Activated CD4-positive, alpha-beta memory T cell treated with anti-CD3 and anti-CD28 coated beads for 36 hours (primary cell): ENCODE measurements at regions of chr15 and their contacts with region 1.

Region 1: DNA sequence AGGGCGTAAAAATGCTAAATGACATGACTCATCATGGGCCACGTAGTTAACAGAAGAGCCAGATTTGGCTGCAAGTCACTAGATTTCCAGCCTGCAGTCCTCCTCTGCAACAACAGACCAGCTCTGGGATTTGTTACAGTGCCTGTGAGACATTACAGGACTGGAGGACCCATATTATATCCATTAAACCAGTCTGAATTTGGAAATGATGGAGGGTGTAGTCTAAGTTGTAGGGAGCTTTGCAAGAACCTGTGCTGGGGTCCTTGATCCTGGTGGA is 10.8 kb downstream of the ZNF774 start:
- DNase-seq: no peak
- H3K4me3 Mint-ChIP-seq: no peak overlapping the region
- H3K27ac Mint-ChIP-seq: peak overlapping the region; percentile 39
- H3K4me1 Mint-ChIP-seq: peaks cover 24% of the 10 kb centered on the region
- H3K27me3 Mint-ChIP-seq: no peaks in the 10 kb centered on the region

Region 2: DNA sequence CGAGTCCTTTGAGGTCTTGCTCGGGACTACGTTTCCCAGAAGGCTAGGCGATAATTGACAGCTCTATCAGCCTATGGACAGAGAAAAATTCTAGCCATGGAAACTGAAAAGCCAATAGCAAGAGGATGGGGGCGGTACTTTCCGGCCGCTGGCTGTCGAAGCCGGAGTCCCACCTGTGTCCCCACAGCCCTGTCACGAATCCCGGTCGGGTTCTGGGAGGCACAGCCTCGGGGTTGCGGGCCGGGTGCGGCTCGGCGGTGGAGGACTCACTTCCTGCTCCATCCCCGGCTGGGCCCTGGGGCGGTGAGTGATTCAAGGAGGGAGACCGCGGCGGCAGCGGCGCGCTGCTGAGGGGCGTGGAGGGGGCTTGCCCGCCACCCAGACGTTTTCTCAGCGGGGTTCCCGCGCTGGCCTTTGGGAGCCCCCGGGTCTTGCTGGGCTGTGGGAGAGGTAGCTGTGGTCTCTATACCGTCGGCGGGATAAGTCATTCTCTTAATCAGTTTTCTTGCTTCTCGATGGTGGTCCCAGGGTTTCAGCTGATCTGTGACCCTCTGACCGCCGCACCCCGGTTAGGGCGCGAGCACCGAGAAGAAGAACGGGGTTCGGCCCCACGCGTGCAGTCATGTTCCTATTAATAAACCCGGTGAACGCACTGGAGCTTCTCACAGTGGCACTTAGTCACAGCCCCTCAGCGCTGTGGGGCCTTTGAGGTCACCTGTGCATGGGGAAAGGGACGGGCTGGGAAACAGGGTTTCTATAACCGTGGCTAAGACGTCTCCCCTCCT is 10.6 kb before region 1 on chr15 and contains the start of gene ZNF774:
- CTCF ChIA-PET with region 1: interaction called, 11 read pairs
- POLR2A ChIA-PET with region 1: no interaction called
- intact Hi-C with region 1: loop called (anchors 1 kb)
- DNase-seq: peak; percentile 93
- H3K4me3 Mint-ChIP-seq: peak within 1 kb of the TSS; percentile 87
- H3K27ac Mint-ChIP-seq: no peak within 1 kb of the TSS
- H3K4me1 Mint-ChIP-seq: peaks cover 6% of the 10 kb centered on the region
- H3K27me3 Mint-ChIP-seq: peaks cover 4% of the 10 kb centered on the region
- total RNA-seq, gene ZNF774: 0.68 to 1.1 TPM

Region 3: DNA sequence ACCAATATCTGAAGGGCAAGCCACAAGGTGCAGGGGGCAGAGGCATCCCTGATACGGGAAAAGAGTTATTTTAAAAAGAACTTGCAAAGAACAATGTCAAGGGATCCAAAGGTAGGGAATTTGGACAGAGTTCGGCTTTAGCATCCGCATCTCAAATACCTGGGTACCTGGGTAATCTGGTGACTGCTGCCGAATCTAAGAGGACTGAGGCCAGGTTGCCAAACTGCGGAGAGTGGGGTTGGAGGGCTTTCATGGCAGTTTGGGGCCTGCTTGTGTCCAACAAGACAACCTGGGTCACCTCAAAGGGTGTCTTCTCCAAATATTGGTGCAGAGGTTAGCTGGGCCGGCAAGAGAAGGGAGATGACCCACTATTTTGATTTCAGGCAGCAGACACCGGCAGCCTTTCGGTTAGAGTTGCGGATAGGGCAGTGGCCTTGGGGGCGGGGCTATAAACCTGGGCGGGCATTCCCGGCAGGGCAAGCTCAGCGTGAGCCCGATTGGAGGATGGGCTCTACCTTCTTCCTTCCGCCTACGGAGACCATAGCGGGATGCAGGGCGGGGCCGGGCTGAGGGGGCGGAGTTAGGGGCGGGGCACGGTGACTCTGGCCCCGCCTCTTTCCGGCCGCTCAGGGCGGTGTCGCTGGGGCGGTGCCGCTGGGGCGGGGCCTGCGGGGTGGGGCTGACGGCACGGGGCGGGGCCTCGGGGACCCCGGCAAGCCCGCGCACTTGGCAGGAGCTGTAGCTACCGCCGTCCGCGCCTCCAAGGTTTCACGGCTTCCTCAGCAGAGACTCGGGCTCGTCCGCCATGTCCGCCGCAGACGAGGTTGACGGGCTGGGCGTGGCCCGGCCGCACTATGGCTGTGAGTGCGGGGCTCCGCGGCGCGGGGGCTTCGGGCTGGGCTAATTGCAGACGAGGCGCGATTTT is 24.9 kb after region 1 on chr15 and contains the start of gene IQGAP1:
- CTCF ChIA-PET with region 1: interaction called, 17 read pairs
- POLR2A ChIA-PET with region 1: interaction called, 6 read pairs
- intact Hi-C with region 1: no loop called
- DNase-seq: peak; percentile 98
- H3K4me3 Mint-ChIP-seq: peak within 1 kb of the TSS; percentile 92
- H3K27ac Mint-ChIP-seq: peak within 1 kb of the TSS; percentile 91
- H3K4me1 Mint-ChIP-seq: peaks cover 46% of the 10 kb centered on the region
- H3K27me3 Mint-ChIP-seq: no peaks in the 10 kb centered on the region
- total RNA-seq, gene IQGAP1: 186 to 207 TPM

Region 4: DNA sequence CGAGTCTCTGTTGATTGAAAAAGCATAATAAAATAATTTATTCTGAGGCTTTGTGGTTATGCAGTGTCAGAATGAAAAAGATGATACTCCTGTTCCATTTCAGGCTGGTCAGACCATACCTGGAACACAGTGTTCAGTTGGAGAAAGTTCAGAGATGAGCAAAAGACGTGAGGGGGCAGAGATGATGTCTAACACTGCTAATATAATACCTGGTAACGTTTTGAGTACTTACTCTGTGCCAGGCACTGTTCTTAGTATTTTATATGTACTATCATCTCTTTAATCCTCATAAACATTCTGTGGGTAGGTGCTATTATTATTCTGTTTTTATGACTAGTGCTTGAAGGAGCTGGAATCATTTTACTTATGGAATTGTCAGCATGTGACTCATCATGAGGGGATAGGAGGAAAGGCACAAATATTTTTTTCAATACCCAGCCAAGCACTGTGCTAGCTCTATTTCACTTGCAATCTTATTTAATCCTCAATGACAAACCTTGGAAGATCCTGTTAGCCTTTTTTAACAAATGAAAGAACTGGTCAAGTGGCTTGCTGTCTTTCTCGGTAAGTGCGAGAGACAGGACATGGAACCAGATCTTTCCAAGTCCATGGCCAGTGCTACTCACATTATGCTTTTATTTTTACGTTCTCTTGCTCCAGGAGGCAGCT is 57.0 kb after region 1 on chr15:
- CTCF ChIA-PET with region 1: interaction called, 5 read pairs
- POLR2A ChIA-PET with region 1: no interaction called
- intact Hi-C with region 1: loop called (anchors 2 kb)
- DNase-seq: peak; percentile 62
- H3K4me3 Mint-ChIP-seq: peak overlapping the region; percentile 61
- H3K27ac Mint-ChIP-seq: peak overlapping the region; percentile 90
- H3K4me1 Mint-ChIP-seq: peaks cover 75% of the 10 kb centered on the region
- H3K27me3 Mint-ChIP-seq: no peaks in the 10 kb centered on the region